ENCODE measurements at regions of chr13 and their contacts with region 1.

Region 1: GRCh38 chr13:97068151-97068550 is 73.9 kb upstream of the OXGR1 start:
- DNase-seq: no peak

Region 2: DNA sequence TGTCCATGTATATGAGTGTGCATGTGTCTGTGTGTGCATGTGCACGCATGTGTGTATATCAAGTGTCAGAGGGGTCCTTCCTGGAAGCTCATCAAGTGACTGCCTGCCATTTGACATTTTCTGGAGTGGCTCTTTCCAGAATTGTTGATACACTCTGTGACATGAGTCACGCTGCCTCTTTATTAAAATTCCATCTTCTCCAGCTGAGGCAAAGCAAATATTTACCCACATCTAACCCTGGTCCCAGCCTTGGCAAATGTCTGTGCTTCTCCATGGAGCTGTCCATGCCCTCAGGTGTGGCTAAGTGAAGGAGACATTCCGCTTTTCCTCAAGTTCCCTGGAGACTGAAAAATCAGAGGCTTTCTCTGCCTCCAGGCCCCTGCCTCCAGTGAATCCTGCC is 65.8 kb after region 1 on chr13:
- intact Hi-C with region 1: loop called in 1 of 2 experiments (anchors 2 kb)
- DNase-seq: no peak